SK-MEL-5 (cell line): ENCODE measurements at regions of chr11 and their contacts with region 1.

Region 1: DNA sequence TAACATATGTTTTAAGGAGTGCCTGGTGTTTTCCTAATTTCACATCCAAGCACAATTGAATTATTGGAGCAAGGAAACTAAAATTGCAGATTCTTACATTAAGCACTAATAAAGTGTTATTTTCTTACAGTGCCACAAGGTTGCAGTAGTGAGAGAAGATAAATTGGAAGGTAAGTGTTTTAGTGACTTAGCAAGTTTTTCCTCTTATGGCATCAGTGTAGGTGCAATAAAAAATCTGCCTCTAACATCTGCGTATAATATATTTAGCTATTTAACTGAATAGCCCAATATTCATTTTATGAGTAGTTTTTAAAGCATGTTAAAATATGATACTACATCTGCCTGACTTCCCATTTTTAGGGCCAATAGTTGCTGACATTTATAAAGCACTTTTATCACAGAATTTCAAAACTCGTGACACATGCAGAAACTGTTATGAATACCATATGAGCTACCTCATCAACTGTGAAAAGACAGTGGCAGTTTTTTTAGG is 19.0 kb downstream of the POLD3 start:
- DNase-seq: peak; percentile 75

Region 2: GRCh38 chr11:74371279-74372049 is 240.0 kb before region 1 on chr11:
- in situ Hi-C with region 1: no loop called
- DNase-seq: peak; percentile 81

Region 3: DNA sequence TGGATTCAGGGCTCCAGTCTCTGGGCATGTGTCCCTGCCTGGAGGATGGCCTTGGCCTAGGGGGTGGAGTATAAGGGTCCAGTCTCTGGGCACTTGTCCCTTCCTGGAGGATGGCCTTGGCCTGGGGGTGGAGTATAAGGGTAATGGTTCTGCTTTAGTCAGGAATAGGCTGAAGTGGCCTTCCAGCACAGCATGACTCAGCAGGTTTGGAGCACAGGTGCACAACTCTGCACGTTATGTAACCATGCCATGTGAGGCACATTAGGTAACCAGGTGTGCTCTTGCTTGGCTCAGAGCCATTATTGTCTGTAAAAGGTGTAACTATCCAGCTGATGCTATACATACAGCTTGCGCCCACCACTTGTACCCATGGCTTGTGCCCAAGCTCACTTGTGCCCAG is 67.4 kb before region 1 on chr11:
- in situ Hi-C with region 1: no loop called
- DNase-seq: no peak

Region 4: GRCh38 chr11:74748211-74749127 is 137.1 kb after region 1 on chr11 and contains the start of gene RNF169:
- in situ Hi-C with region 1: loop called (anchors 25 kb)
- DNase-seq: peak; percentile 99
- total RNA-seq, gene RNF169: 14.7 and 15.6 TPM in 2 replicates